HEK293 (cell line): ENCODE measurements at regions of chr6 and their contacts with region 1.

Region 1: DNA sequence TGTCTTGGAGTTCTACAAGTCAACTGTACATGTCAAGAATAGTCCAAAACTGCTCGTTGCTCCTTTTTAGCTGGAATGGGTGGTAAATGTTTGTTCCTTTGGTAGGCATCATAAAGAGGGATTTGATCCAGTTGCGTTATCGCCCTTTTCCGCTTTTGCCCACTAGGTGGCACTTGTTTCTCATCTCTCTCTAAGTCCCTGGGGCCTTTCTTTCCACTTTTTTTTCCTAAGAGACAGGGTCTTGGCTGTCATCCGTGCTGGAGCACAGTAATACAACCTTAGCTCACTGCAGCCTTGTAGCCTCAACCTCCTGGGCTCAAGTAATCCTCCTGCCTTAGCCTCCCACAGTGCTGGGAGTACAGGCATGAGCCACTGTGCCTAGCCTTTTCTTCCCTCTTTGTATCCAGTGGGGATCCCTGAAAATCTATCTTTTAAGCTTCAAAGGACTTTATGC is 20.7 kb downstream of the GTPBP2 start:
- H3K4me3 ChIP-seq: no peak overlapping the region
- H3K27ac ChIP-seq: no peak overlapping the region
- H3K4me1 ChIP-seq: no peaks in the 10 kb centered on the region
- CTCF ChIP-seq: peak; percentile 83

Region 2: DNA sequence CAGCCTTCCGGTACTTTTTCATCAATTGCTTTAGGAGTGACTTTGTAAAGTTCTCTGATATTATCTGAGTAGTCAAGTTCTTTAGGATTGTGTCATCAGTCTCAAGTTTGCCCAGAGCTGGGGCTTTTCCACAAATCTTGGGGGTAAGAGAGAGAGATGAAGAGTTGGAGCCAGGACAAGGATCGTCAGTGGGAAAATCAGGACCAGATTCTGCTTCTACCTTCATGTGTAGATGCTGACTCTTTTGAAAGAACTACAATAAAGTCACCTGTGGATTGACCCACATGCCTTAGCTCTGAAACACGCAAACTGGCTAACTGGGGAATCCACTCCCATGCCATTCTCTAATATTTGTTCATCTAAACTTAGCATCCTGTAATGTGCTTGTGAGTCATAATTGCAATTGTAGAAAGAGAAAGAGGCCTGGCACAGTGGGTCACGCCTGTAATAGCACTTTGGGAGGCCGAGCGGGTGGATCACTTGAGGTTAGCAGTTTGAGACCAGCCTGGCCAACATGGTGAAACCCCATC is 842.1 kb before region 1 on chr6:
- CTCF ChIA-PET with region 1: no interaction called
- POLR2A ChIA-PET with region 1: interaction called, 10 read pairs
- H3K4me3 ChIP-seq: no peak overlapping the region
- H3K27ac ChIP-seq: no peak overlapping the region
- H3K4me1 ChIP-seq: no peaks in the 10 kb centered on the region; the same call in 1 of the 2 replicates
- CTCF ChIP-seq: no peak

Region 3: GRCh38 chr6:43203029-43203717 is 405.2 kb before region 1 on chr6:
- CTCF ChIA-PET with region 1: no interaction called
- POLR2A ChIA-PET with region 1: no interaction called
- H3K4me3 ChIP-seq: no peak overlapping the region
- H3K27ac ChIP-seq: no peak overlapping the region
- H3K4me1 ChIP-seq: no peaks in the 10 kb centered on the region
- CTCF ChIP-seq: no peak

Region 4: GRCh38 chr6:43468748-43469681 is 139.3 kb before region 1 on chr6:
- CTCF ChIA-PET with region 1: no interaction called
- POLR2A ChIA-PET with region 1: no interaction called
- H3K4me3 ChIP-seq: no peak overlapping the region
- H3K27ac ChIP-seq: no peak overlapping the region; the same call in 1 of the 2 replicates
- H3K4me1 ChIP-seq: peaks cover 5% of the 10 kb centered on the region; the same call in 1 of the 2 replicates
- CTCF ChIP-seq: no peak

Region 5: GRCh38 chr6:43593938-43594337 is 14.4 kb before region 1 on chr6:
- CTCF ChIA-PET with region 1: interaction called, 36 read pairs
- POLR2A ChIA-PET with region 1: no interaction called
- H3K4me3 ChIP-seq: no peak overlapping the region
- H3K27ac ChIP-seq: no peak overlapping the region
- H3K4me1 ChIP-seq: no peaks in the 10 kb centered on the region
- CTCF ChIP-seq: no peak

Region 6: GRCh38 chr6:43621429-43622180 is 13.3 kb after region 1 on chr6:
- CTCF ChIA-PET with region 1: interaction called, 26 read pairs
- POLR2A ChIA-PET with region 1: interaction called, 4 read pairs
- H3K4me3 ChIP-seq: no peak overlapping the region
- H3K27ac ChIP-seq: no peak overlapping the region
- H3K4me1 ChIP-seq: no peaks in the 10 kb centered on the region
- CTCF ChIP-seq: no peak